ENCODE measurements at regions of chr6 and their contacts with region 1.

Region 1: DNA sequence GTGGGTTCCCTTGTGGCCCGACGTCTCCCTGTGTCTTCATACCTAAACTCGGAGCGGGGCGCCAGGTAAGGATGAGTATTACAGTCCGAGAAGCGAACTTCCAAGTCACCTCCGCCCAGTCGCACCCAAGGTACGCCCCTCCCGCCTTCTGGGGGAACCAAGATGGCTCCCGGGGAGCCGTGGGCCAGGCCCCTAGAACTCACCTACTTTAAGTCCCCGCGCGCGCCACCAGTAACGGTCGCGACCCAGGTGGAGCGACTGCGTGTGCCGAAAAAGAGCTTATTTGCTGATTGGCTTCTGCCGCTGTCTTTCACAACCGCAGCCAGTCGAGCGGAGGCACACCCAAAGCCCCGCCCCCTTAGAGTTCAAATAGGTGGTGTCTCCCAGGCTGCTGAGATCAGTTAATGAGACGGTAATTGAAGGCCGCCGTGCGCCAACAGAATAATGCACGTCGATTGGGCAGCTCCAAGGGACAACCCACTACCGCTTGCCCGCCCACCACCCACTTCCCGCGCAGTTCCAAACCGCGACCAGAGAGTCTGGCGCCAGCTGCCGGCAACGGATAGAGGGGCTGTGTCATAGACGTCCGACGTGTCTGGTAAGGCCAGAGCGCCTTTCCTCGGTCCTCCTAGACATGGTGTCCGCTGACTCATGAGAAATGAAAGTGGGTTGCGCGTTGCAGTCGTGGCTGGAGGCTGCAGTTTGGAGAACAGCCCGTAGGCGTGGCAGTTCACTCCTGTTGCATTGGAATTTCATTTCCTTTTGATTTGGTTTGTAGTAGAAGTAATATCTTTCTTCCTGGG is at the start of gene MDC1:
- DNase-seq: peak; percentile 91
- ATAC-seq: peak; percentile 73
- H3K4me3 Mint-ChIP-seq: peak within 1 kb of the TSS; percentile 99
- H3K27ac Mint-ChIP-seq: peak within 1 kb of the TSS; percentile 99
- H3K4me1 Mint-ChIP-seq: peaks cover 57% of the 10 kb centered on the region
- H3K27me3 Mint-ChIP-seq: no peaks in the 10 kb centered on the region
- CTCF ChIP-seq: no peak
- total RNA-seq, gene MDC1: 62.4 and 65.6 TPM in 2 replicates

Region 2: DNA sequence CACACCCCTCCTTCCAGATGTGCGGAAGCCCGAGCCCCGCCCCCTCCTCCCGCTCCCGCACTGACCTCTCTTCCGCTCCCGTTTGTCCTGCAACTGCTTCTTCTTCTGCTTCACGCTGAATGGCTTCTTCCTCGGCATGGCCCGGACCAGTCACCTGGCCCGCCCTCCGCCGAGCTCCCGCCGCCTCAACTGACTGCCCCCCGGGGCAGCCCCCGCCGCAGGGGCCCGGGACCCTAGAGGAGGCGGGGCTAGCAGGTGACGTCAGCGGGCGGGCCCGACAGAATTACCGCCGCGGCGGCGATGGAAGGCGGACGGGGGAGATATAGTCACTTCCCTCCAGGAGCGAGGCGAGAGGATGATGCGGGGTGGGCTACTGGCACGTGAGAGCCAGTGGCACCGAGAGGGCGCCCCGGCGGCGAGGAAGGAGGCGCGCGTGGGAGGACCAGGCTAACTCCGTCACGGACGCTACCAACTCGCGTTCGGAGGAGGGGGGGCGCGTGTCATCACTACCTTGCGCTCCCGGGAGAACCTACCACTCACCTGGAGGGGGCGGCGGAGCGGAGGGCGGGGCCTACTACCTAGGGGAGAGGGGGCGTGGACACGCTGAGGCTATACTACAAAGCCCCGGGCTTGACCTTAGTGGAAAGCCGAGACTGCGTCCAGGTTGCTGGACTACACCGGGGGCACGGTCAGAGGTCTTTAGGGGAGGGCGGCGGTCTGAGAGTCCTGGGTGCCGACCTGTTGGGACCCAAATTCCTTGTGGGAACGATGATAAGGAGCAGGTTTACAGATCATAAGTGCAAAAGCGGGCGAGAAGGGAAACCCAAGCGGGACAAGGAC is 161.0 kb before region 1 on chr6 and contains the start of gene GNL1:
- CTCF ChIA-PET with region 1: no interaction called
- POLR2A ChIA-PET with region 1: interaction called, 6 read pairs
- intact Hi-C with region 1: loop called (anchors 1 kb)
- DNase-seq: peak; percentile 99
- ATAC-seq: peak; percentile 89
- H3K4me3 Mint-ChIP-seq: peak within 1 kb of the TSS; percentile 94
- H3K27ac Mint-ChIP-seq: peak within 1 kb of the TSS; percentile 97
- H3K4me1 Mint-ChIP-seq: peaks cover 40% of the 10 kb centered on the region
- H3K27me3 Mint-ChIP-seq: no peaks in the 10 kb centered on the region
- CTCF ChIP-seq: no peak
- total RNA-seq, gene GNL1: 67.2 and 67.4 TPM in 2 replicates

Region 3: GRCh38 chr6:30672445-30673253 is 44.6 kb before region 1 on chr6 and contains the start of gene DHX16:
- CTCF ChIA-PET with region 1: interaction called, 576 read pairs
- POLR2A ChIA-PET with region 1: interaction called, 697 read pairs
- intact Hi-C with region 1: no loop called
- DNase-seq: peak; percentile 80
- ATAC-seq: peak; percentile 88
- H3K4me3 Mint-ChIP-seq: peak within 1 kb of the TSS; percentile 91
- H3K27ac Mint-ChIP-seq: peak within 1 kb of the TSS; percentile 84
- H3K4me1 Mint-ChIP-seq: peaks cover 42% of the 10 kb centered on the region
- H3K27me3 Mint-ChIP-seq: no peaks in the 10 kb centered on the region
- CTCF ChIP-seq: peak; percentile 51
- total RNA-seq, gene DHX16: 42.3 and 50.4 TPM in 2 replicates

Region 4: DNA sequence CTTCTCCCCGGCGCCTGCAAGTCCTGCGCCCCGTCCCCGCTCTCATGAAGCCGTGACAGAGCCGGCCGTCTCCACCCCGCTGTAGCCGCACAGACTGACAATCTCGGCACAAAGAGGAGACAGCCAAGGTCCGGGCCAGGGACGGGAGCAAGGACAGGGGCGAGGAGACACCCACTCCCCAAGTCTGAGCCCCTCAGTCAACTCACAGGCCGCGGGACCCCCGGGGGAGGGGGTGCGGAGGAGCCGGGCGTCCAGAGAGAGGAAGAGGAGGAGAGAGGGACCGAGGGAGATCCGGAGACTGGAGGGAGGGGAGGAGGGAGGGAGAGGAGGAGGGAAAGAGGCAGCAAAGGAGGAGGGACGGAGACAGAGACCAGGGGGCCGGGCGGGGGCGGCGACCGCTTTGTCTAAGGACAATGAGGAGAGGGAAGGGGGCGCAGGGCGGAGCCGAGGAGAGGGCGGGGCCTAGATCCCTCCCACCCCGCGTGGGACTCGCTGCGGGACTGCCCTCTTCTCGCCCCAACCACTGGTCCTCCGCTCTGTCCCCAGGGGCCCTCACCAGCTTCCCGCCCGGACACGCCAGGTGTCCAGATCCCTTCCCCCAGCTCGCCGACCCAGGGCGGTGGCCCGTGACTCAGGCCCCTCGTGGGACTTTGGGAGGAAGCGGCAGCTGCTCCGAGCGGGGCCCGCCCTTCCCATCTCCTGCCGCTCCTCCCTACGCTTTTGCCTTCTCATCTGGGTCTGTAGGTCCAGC is 30.2 kb before region 1 on chr6:
- CTCF ChIA-PET with region 1: interaction called, 576 read pairs
- POLR2A ChIA-PET with region 1: interaction called, 697 read pairs
- intact Hi-C with region 1: loop called (anchors 1 kb)
- DNase-seq: peak; percentile 82
- ATAC-seq: peak; percentile 56
- H3K4me3 Mint-ChIP-seq: peak overlapping the region; percentile 92
- H3K27ac Mint-ChIP-seq: peak overlapping the region; percentile 99
- H3K4me1 Mint-ChIP-seq: peaks cover 78% of the 10 kb centered on the region
- H3K27me3 Mint-ChIP-seq: no peaks in the 10 kb centered on the region
- CTCF ChIP-seq: no peak

Region 5: GRCh38 chr6:30730601-30731435 is 13.6 kb after region 1 on chr6:
- CTCF ChIA-PET with region 1: interaction called, 25 read pairs
- POLR2A ChIA-PET with region 1: interaction called, 16 read pairs
- intact Hi-C with region 1: no loop called
- DNase-seq: peak; percentile 69
- ATAC-seq: peak; percentile 89
- H3K4me3 Mint-ChIP-seq: peak overlapping the region; percentile 41
- H3K27ac Mint-ChIP-seq: no peak overlapping the region
- H3K4me1 Mint-ChIP-seq: peaks cover 27% of the 10 kb centered on the region
- H3K27me3 Mint-ChIP-seq: no peaks in the 10 kb centered on the region
- CTCF ChIP-seq: peak; percentile 23

Region 6: DNA sequence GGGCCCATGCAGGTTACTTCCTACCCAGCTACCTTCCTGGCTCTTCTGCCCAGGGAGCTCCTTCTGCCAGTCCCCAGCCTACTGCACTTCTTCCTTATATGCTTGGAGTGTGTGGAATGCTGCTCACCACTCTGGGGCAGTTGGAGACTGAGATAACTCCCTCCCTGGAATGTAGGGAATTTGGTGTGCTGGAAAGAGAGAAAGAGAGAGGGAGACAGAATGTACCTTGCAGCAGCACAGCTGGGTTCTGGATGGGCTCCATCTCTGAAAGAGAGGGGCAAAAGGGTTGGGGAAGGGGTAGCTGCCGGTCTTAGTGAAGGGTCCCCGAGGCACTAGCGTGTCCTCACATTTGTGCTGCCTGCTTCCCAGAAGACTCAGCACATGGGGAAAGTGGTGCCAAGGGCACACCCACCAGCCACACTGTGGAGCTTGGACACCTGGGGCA is 126.9 kb after region 1 on chr6:
- CTCF ChIA-PET with region 1: no interaction called
- POLR2A ChIA-PET with region 1: no interaction called
- intact Hi-C with region 1: no loop called
- DNase-seq: no peak
- ATAC-seq: no peak
- H3K4me3 Mint-ChIP-seq: no peak overlapping the region
- H3K27ac Mint-ChIP-seq: no peak overlapping the region
- H3K4me1 Mint-ChIP-seq: no peaks in the 10 kb centered on the region
- H3K27me3 Mint-ChIP-seq: peaks cover 16% of the 10 kb centered on the region
- CTCF ChIP-seq: no peak

Region 7: DNA sequence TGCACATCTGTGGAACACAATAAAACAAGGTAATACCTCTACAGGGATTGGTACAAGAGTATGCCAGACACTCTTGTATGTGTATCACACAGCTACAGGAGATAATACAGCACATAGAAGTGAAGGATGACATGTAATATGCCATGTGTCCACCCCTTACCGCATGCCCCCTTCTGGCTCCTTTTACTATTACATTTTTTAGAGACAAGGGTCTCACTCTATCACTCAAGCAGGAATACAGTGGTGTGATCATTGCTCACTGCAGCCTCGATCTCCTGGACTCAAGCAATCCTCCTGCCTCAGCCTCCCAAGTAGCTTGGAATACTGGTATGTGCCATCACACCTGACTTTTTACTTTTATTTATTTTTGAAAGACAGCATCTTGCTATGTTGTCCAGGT is 879.8 kb after region 1 on chr6:
- CTCF ChIA-PET with region 1: no interaction called
- POLR2A ChIA-PET with region 1: no interaction called
- intact Hi-C with region 1: no loop called
- DNase-seq: no peak
- ATAC-seq: peak; percentile 73
- H3K4me3 Mint-ChIP-seq: peak overlapping the region; percentile 25
- H3K27ac Mint-ChIP-seq: peak overlapping the region; percentile 75
- H3K4me1 Mint-ChIP-seq: peaks cover 58% of the 10 kb centered on the region
- H3K27me3 Mint-ChIP-seq: no peaks in the 10 kb centered on the region
- CTCF ChIP-seq: no peak